Activated naive CD4-positive, alpha-beta T cell treated with anti-CD3 and anti-CD28 coated beads for 36 hours (primary cell): ENCODE measurements at regions of chr2 and their contacts with region 1.

Region 1: DNA sequence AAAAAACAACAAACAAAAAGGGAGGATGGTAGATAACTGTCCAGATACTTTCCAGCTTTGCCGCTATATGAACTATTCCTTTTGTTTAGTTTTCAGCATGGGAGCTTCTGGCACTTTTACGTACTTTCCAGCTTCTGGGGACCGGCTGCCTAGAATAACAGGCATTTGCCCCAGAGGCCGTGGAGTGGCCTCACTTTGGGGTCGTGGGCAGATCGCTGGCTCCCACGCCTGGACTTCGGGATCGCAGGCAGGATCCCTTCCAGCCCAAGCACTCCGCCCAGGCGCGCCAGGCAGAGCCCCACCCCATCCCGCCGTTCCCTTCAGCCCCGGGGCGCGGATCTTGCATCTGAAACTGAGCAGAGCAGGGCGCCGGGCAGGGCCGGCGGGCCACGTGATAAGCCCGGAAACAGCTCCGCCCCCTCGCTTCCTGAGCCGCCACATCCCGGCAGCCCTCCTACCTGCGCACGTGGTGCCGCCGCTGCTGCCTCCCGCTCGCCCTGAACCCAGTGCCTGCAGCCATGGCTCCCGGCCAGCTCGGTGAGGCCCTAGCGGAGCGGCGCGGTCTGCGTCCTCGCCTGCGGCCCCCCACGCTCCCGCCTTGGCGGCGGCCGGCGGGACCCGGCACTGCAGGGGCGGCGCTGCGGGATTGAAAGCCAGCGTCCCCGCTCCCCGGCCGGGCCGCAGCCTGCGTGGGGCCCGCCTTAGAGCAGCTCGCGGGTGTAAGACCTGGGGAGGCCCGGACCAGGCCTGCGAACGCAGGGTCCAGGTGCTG is at the start of gene ATIC:
- DNase-seq: peak; percentile 94
- H3K4me3 Mint-ChIP-seq: peak within 1 kb of the TSS; percentile 94
- H3K27ac Mint-ChIP-seq: peak within 1 kb of the TSS; percentile 90
- H3K4me1 Mint-ChIP-seq: peaks cover 36% of the 10 kb centered on the region
- H3K27me3 Mint-ChIP-seq: no peaks in the 10 kb centered on the region
- total RNA-seq, gene ATIC: 281 to 305 TPM

Region 2: GRCh38 chr2:215137807-215138206 is 174.0 kb before region 1 on chr2:
- CTCF ChIA-PET with region 1: no interaction called
- intact Hi-C with region 1: no loop called
- DNase-seq: no peak
- H3K4me3 Mint-ChIP-seq: no peak overlapping the region
- H3K27ac Mint-ChIP-seq: no peak overlapping the region
- H3K4me1 Mint-ChIP-seq: no peaks in the 10 kb centered on the region
- H3K27me3 Mint-ChIP-seq: peaks cover 14% of the 10 kb centered on the region

Region 3: GRCh38 chr2:215269397-215270119 is 42.3 kb before region 1 on chr2:
- CTCF ChIA-PET with region 1: interaction called, 4 read pairs
- intact Hi-C with region 1: loop called (anchors 2 kb)
- DNase-seq: peak; percentile 69
- H3K4me3 Mint-ChIP-seq: no peak overlapping the region
- H3K27ac Mint-ChIP-seq: no peak overlapping the region
- H3K4me1 Mint-ChIP-seq: peaks cover 3% of the 10 kb centered on the region
- H3K27me3 Mint-ChIP-seq: no peaks in the 10 kb centered on the region

Region 4: GRCh38 chr2:215299337-215299859 is 12.4 kb before region 1 on chr2:
- CTCF ChIA-PET with region 1: no interaction called
- intact Hi-C with region 1: no loop called
- DNase-seq: no peak
- H3K4me3 Mint-ChIP-seq: no peak overlapping the region
- H3K27ac Mint-ChIP-seq: no peak overlapping the region
- H3K4me1 Mint-ChIP-seq: no peaks in the 10 kb centered on the region
- H3K27me3 Mint-ChIP-seq: no peaks in the 10 kb centered on the region

Region 5: DNA sequence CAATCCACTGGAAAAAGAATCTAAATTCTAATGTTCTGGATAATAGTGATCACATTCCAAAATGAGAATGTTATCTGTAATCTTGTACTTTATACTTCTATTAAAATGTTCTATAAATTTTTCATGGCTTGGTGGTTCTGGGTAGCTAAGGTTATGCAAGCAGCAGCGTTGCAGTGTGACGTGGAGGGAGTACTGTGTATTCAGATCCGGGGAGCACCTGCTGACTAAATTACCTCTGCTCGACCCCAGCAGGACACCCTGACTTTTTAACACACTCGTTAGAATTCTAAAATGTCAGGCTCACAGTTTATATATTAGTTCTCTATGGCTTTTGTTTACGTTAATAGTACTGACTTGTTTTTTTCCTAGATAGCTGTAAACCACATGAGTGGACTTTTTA is 13.0 kb after region 1 on chr2:
- CTCF ChIA-PET with region 1: no interaction called
- intact Hi-C with region 1: loop called (anchors 2 kb)
- DNase-seq: no peak
- H3K4me3 Mint-ChIP-seq: no peak overlapping the region
- H3K27ac Mint-ChIP-seq: no peak overlapping the region
- H3K4me1 Mint-ChIP-seq: peaks cover 29% of the 10 kb centered on the region
- H3K27me3 Mint-ChIP-seq: no peaks in the 10 kb centered on the region

Region 6: DNA sequence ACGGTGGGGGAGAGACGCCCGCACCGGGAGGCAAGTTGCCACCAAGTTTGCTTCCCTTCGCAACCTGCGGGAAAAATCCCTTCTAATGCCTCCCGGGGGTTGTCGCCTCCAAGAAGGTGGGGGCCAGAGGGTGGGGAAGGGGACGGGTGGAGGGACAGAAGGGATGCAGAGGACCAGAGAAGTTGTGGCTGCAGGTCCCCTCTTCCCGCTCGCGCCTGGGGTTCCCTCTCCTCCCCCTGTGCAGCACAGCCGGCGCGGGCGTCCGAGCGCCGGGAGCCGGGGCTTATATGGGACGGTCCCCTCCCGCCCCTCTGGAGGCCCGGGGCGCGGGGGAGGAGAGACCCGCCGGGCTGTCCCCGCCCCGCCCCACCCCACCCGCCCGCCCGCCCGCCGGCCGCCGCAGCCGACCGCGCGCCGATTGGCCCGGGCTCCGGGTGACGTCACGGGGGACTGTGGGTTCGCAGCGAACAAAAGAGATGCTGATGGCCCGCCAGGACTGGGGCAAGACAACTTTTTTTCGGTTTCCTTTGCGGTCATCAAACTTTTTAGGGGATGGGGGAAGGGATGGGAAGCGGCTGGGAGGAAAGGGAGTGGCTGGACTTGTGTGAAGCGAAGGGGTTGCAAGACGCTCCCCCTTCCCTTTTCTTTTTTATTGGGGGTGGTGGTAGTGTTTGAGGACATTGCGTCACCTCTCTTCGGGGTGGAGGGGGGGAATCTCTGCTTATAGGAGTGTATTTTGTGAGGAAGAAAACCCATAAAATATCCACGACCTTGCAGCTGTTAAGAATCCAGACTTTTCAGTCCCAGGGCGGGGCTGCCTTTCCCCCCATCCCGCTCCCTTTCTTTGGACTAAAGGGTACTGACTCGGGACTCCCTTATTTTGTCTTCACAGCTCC is 124.2 kb after region 1 on chr2 and contains the start of gene FN1:
- CTCF ChIA-PET with region 1: no interaction called
- intact Hi-C with region 1: loop called (anchors 2 kb)
- DNase-seq: peak; percentile 64
- H3K4me3 Mint-ChIP-seq: peak within 1 kb of the TSS; percentile 72
- H3K27ac Mint-ChIP-seq: no peak within 1 kb of the TSS
- H3K4me1 Mint-ChIP-seq: peaks cover 19% of the 10 kb centered on the region
- H3K27me3 Mint-ChIP-seq: peaks cover 50% of the 10 kb centered on the region
- total RNA-seq, gene FN1: 0.45 to 0.57 TPM

Region 7: GRCh38 chr2:216013080-216013909 is 701.5 kb after region 1 on chr2 and contains the start of gene MREG:
- CTCF ChIA-PET with region 1: no interaction called
- intact Hi-C with region 1: loop called (anchors 5 kb)
- DNase-seq: peak; percentile 91
- H3K4me3 Mint-ChIP-seq: peak within 1 kb of the TSS; percentile 81
- H3K27ac Mint-ChIP-seq: no peak within 1 kb of the TSS
- H3K4me1 Mint-ChIP-seq: peaks cover 51% of the 10 kb centered on the region
- H3K27me3 Mint-ChIP-seq: no peaks in the 10 kb centered on the region
- total RNA-seq, gene MREG: 3.1 to 3.9 TPM

Region 8: GRCh38 chr2:216081487-216082116 is 769.8 kb after region 1 on chr2 and contains the starts of genes PECR and TMEM169:
- CTCF ChIA-PET with region 1: no interaction called
- intact Hi-C with region 1: loop called (anchors 10 kb)
- DNase-seq: peak; percentile 83
- H3K4me3 Mint-ChIP-seq: peak within 1 kb of the TSS; percentile 87
- H3K27ac Mint-ChIP-seq: peak within 1 kb of the TSS; percentile 75
- H3K4me1 Mint-ChIP-seq: peaks cover 58% of the 10 kb centered on the region
- H3K27me3 Mint-ChIP-seq: no peaks in the 10 kb centered on the region
- total RNA-seq, gene PECR: 18.8 to 20.9 TPM
- total RNA-seq, gene TMEM169: 0.57 to 0.81 TPM

Region 9: GRCh38 chr2:216412022-216412999 is 1100.5 kb after region 1 on chr2 and contains the start of gene SMARCAL1:
- CTCF ChIA-PET with region 1: no interaction called
- intact Hi-C with region 1: loop called (anchors 1 kb)
- DNase-seq: peak; percentile 100
- H3K4me3 Mint-ChIP-seq: peak within 1 kb of the TSS; percentile 92
- H3K27ac Mint-ChIP-seq: peak within 1 kb of the TSS; percentile 90
- H3K4me1 Mint-ChIP-seq: peaks cover 6% of the 10 kb centered on the region
- H3K27me3 Mint-ChIP-seq: no peaks in the 10 kb centered on the region
- total RNA-seq, gene SMARCAL1: 17.0 to 18.2 TPM